GM12878 (cell line): ENCODE measurements at regions of chr10 and their contacts with region 1.

Region 1: GRCh38 chr10:95783741-95784140 is 27.8 kb downstream of the ENTPD1 start:
- DNase-seq: peak; percentile 94
- ATAC-seq: peak; percentile 50
- H3K4me3 ChIP-seq: no peak overlapping the region
- H3K27ac ChIP-seq: peak overlapping the region; percentile 99
- H3K4me1 ChIP-seq: peaks cover 79% of the 10 kb centered on the region
- H3K27me3 ChIP-seq: no peaks in the 10 kb centered on the region
- CTCF ChIP-seq: no peak
- EP300 ChIP-seq: peak; percentile 93 to 99
- POLR2A ChIP-seq: no peak
- RAD21 ChIP-seq: peak; percentile 8; the same call in 1 of the 2 replicates

Region 2: GRCh38 chr10:95767884-95768556 is 15.7 kb before region 1 on chr10:
- CTCF ChIA-PET with region 1: interaction called, 112 read pairs
- POLR2A ChIA-PET with region 1: interaction called, 265 read pairs
- RAD21 ChIA-PET with region 1: interaction called, 10 read pairs
- SMC1A ChIA-PET with region 1: interaction called, 547 read pairs
- in situ Hi-C with region 1: no loop called
- intact Hi-C with region 1: loop called (anchors 2 kb)
- DNase-seq: no peak
- ATAC-seq: peak; percentile 87
- H3K4me3 ChIP-seq: peak overlapping the region; percentile 19; the same call in 1 of the 2 replicates
- H3K27ac ChIP-seq: peak overlapping the region; percentile 94
- H3K4me1 ChIP-seq: peaks cover 34% of the 10 kb centered on the region
- H3K27me3 ChIP-seq: no peaks in the 10 kb centered on the region
- CTCF ChIP-seq: no peak
- EP300 ChIP-seq: peak; percentile 33 to 73; a peak in 3 of 4 replicates
- POLR2A ChIP-seq: no peak
- RAD21 ChIP-seq: peak; percentile 28; the same call in 1 of the 2 replicates

Region 3: GRCh38 chr10:95798096-95798855 is 14.5 kb after region 1 on chr10:
- CTCF ChIA-PET with region 1: interaction called, 19 read pairs
- POLR2A ChIA-PET with region 1: interaction called, 21 read pairs
- RAD21 ChIA-PET with region 1: interaction called, 80 read pairs
- SMC1A ChIA-PET with region 1: interaction called, 70 read pairs
- in situ Hi-C with region 1: no loop called
- intact Hi-C with region 1: loop called (anchors 1 kb)
- DNase-seq: no peak
- ATAC-seq: no peak
- H3K4me3 ChIP-seq: no peak overlapping the region
- H3K27ac ChIP-seq: no peak overlapping the region
- H3K4me1 ChIP-seq: peaks cover 19% of the 10 kb centered on the region
- H3K27me3 ChIP-seq: no peaks in the 10 kb centered on the region
- CTCF ChIP-seq: no peak
- EP300 ChIP-seq: no peak
- POLR2A ChIP-seq: no peak
- RAD21 ChIP-seq: no peak